Colonic mucosa (tissue), 4 donors: ENCODE measurements at regions of chr20 and their contacts with region 1.

Region 1: DNA sequence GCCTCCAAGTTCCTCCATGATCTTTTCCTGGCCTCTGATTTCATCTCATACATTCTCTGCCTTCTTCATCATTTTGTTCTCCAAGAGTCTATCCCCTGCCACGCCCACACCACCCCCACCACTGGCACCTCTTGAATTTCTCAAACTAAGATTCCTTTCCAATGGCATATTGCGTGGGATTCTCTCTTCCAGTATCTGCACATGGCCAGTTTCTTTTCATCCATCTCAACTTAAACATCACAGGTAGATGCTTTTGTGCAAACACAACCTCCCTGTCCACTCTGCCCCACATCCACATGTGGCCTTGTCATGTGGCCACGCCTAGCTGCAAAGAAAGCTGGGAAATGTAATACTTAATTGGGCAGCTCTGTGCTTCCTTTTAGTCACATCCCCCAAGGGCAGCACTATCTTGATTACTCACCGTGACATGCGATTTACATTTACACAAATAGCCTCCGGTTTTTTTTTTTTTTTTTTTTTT is 33.4 kb upstream of the ZMYND8 start:
- DNase-seq: no peak
- H3K4me3 ChIP-seq: no peak overlapping the region
- H3K27ac ChIP-seq: no peak overlapping the region
- H3K4me1 ChIP-seq: no peaks in the 10 kb centered on the region
- H3K27me3 ChIP-seq: no peaks in the 10 kb centered on the region
- CTCF ChIP-seq: no peak

Region 2: DNA sequence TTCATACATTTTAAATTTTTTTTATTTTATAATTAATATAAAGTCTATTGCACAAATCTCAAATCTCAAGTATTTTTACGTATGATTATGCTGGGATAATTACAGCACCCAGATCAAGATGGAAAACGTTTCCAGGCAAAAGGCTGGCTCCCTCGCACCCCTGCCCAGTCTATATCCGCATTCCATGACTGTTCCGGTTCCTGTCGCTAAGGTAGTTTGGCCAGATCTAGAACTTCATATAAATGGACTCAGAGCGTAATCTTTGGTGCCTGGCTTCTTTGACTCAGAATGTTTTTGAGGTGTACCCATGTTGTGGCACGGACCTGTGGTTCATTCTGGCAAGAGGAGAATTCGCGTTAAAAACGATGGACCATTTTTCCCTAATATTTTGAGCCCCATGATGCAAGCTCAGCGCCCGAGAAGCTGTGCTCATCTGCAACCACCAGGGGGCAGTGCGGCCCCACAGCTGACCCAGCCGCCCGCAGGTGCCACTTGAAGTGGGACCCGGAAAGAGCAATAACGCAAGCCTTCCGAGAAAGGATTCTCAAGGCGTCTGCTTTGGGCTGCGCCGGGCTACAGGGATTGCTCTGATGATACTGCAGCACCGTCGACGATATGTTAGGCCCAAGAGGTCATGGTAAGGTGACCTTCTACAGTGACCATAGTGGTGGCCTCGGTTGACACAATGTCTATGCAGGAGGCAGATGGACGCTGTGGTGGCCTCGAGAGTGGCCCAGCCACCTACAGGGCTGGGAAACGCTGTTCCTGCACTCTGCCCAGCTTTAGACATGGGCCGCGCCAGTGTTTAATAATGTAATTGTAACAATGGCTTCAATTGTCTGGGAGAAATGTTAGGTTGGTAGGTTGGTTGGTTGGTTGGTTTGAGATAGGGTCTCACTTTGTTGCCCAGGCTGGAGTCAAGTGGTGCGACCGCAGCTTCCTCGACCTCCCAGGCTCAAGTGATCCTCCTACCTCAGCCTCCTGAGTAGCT is 193.5 kb before region 1 on chr20:
- intact Hi-C with region 1: no loop called
- DNase-seq: peak; percentile 76
- H3K4me3 ChIP-seq: no peak overlapping the region
- H3K27ac ChIP-seq: no peak overlapping the region
- H3K4me1 ChIP-seq: no peaks in the 10 kb centered on the region
- H3K27me3 ChIP-seq: no peaks in the 10 kb centered on the region
- CTCF ChIP-seq: peak; percentile 93

Region 3: DNA sequence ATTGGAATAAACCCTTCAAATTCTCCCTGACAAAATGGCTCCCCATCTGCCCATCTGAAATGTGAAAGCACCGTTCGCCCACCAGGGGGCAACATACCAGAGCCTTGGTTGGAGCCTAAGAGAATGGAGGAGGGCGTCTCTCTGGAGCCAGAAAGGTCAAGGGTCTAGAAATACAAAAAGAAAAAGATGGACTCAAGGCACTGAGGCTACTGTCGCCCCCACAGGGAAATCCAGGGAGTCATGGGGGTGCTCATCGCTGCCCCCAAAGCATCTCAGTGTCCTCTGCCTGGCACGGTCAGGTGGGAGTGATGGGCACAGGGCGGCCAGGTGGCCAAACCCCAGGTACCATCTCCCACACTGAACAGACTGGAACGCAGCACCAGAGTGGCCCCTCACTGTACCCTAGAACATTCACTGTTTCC is 169.7 kb before region 1 on chr20:
- intact Hi-C with region 1: no loop called
- DNase-seq: peak; percentile 32
- H3K4me3 ChIP-seq: no peak overlapping the region
- H3K27ac ChIP-seq: no peak overlapping the region
- H3K4me1 ChIP-seq: no peaks in the 10 kb centered on the region
- H3K27me3 ChIP-seq: no peaks in the 10 kb centered on the region
- CTCF ChIP-seq: no peak

Region 4: GRCh38 chr20:47272893-47273590 is 116.9 kb before region 1 on chr20:
- intact Hi-C with region 1: loop called (anchors 2 kb)
- DNase-seq: peak; percentile 66
- H3K4me3 ChIP-seq: no peak overlapping the region
- H3K27ac ChIP-seq: peak overlapping the region; percentile 54
- H3K4me1 ChIP-seq: no peaks in the 10 kb centered on the region
- H3K27me3 ChIP-seq: no peaks in the 10 kb centered on the region
- CTCF ChIP-seq: peak; percentile 83

Region 5: GRCh38 chr20:49091762-49092161 is 1701.9 kb after region 1 on chr20:
- intact Hi-C with region 1: no loop called
- DNase-seq: no peak
- H3K4me3 ChIP-seq: no peak overlapping the region
- H3K27ac ChIP-seq: no peak overlapping the region
- H3K4me1 ChIP-seq: no peaks in the 10 kb centered on the region
- H3K27me3 ChIP-seq: no peaks in the 10 kb centered on the region
- CTCF ChIP-seq: no peak